ENCODE measurements at regions of chr10 and their contacts with region 1.

Region 1: GRCh38 chr10:111756217-111757061 is 427.1 kb downstream of the GPAM start:
- H3K4me3 ChIP-seq: no peak overlapping the region
- H3K27ac ChIP-seq: no peak overlapping the region
- H3K4me1 ChIP-seq: no peaks in the 10 kb centered on the region
- CTCF ChIP-seq: no peak

Region 2: DNA sequence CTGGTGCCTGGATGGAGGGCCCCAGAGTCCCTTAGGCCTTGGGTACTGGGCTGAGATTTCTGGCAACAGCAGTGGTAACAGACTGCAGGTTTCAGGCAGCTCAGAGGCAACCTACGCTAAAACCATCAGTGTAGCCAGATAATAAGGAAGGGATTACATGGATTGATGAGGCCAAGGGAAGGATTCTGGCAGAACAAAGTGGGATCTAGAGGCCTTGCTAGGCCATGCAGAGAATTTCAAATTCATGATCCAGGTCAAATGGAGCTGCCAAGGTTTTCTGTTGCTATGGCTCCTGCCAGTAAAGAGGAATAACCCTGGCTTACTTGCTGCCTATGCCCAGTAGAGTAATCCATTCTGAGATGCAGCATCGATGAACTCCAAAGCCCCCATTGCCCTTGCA is 233.9 kb before region 1 on chr10:
- CTCF ChIA-PET with region 1: no interaction called
- POLR2A ChIA-PET with region 1: no interaction called
- H3K4me3 ChIP-seq: no peak overlapping the region
- H3K27ac ChIP-seq: no peak overlapping the region
- H3K4me1 ChIP-seq: no peaks in the 10 kb centered on the region
- CTCF ChIP-seq: no peak

Region 3: DNA sequence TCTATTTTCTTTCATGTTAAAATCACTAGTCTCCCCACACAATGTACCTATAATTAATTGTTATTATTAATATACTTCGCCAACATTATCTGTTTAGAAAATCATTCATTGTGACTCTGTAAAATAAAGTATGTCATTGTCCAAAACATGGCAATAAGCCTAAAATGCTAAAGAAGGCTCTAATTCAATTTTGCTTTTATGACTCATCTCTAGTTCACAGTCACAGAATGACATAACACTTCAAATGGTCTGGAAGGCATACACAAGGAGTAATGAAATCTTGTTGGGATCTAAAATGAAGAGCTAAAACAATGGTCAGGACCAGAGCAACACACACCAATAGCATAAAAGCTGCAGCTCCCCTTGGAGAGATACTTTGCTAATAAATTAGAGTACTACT is 78.7 kb before region 1 on chr10:
- CTCF ChIA-PET with region 1: no interaction called
- POLR2A ChIA-PET with region 1: no interaction called
- H3K4me3 ChIP-seq: no peak overlapping the region
- H3K27ac ChIP-seq: no peak overlapping the region
- H3K4me1 ChIP-seq: no peaks in the 10 kb centered on the region
- CTCF ChIP-seq: no peak

Region 4: DNA sequence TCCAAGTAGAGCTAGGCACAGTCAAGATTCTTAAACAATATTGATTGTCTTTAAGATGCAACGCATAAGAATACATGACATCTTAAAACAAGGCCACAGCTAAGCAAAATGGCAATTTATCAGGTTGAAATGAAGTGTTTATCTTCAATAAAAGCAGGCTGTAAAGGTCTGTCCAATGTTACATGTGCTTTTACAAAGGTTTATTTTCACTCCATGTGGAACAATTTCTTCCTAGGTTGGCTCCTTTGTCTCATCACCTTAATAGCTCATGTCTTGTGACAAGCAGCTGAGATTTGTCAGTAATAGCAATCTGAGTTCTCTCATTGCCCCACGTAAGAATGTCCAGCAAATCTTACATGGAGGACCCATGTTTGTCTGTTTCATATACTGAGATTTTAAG is 10.5 kb before region 1 on chr10:
- CTCF ChIA-PET with region 1: interaction called, 12 read pairs
- POLR2A ChIA-PET with region 1: no interaction called
- H3K4me3 ChIP-seq: no peak overlapping the region
- H3K27ac ChIP-seq: no peak overlapping the region
- H3K4me1 ChIP-seq: no peaks in the 10 kb centered on the region
- CTCF ChIP-seq: no peak

Region 5: GRCh38 chr10:111801841-111802240 is 45.4 kb after region 1 on chr10:
- CTCF ChIA-PET with region 1: no interaction called
- POLR2A ChIA-PET with region 1: no interaction called
- H3K4me3 ChIP-seq: no peak overlapping the region
- H3K27ac ChIP-seq: no peak overlapping the region
- H3K4me1 ChIP-seq: no peaks in the 10 kb centered on the region
- CTCF ChIP-seq: no peak

Measured in HEK293 (cell line).